ENCODE measurements at regions of chr10 and their contacts with region 1.

Region 1: GRCh38 chr10:117496616-117497028 is 45.9 kb upstream of the EMX2 start:
- DNase-seq: peak; percentile 72
- ATAC-seq: peak; percentile 98
- H3K4me3 ChIP-seq: no peak overlapping the region
- H3K27ac ChIP-seq: no peak overlapping the region
- H3K4me1 ChIP-seq: no peaks in the 10 kb centered on the region
- H3K27me3 ChIP-seq: no peaks in the 10 kb centered on the region
- CTCF ChIP-seq: peak; percentile 97
- POLR2A ChIP-seq: no peak
- RAD21 ChIP-seq: peak; percentile 98

Region 2: DNA sequence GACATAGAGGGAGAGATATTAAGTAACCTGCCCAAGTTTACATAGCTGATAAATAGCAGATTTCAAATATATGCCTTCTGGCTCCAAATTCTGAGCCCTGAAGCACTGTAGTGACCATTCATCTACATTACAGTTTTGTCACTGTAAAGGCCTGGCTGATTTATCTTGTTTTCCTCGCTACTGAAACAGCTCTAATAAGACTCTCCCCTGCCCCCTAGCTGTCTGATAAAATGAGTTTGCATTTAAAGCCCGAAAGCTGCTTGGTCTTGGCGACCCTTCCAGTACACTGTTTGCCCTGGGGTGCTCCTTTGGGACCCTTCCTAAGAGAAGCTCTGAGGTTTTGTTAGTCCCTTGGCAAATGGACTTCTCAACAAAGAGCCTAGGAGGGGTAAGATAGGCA is 609.8 kb after region 1 on chr10:
- CTCF ChIA-PET with region 1: no interaction called
- POLR2A ChIA-PET with region 1: no interaction called
- dilution Hi-C with region 1: no loop called
- in situ Hi-C with region 1: no loop called
- intact Hi-C with region 1: loop called (anchors 2 kb)
- DNase-seq: peak; percentile 21
- ATAC-seq: peak; percentile 44; the same call in 1 of the 2 replicates
- H3K4me3 ChIP-seq: no peak overlapping the region
- H3K27ac ChIP-seq: no peak overlapping the region
- H3K4me1 ChIP-seq: no peaks in the 10 kb centered on the region
- H3K27me3 ChIP-seq: no peaks in the 10 kb centered on the region
- CTCF ChIP-seq: peak; percentile 44
- POLR2A ChIP-seq: no peak
- RAD21 ChIP-seq: peak; percentile 48

Region 3: DNA sequence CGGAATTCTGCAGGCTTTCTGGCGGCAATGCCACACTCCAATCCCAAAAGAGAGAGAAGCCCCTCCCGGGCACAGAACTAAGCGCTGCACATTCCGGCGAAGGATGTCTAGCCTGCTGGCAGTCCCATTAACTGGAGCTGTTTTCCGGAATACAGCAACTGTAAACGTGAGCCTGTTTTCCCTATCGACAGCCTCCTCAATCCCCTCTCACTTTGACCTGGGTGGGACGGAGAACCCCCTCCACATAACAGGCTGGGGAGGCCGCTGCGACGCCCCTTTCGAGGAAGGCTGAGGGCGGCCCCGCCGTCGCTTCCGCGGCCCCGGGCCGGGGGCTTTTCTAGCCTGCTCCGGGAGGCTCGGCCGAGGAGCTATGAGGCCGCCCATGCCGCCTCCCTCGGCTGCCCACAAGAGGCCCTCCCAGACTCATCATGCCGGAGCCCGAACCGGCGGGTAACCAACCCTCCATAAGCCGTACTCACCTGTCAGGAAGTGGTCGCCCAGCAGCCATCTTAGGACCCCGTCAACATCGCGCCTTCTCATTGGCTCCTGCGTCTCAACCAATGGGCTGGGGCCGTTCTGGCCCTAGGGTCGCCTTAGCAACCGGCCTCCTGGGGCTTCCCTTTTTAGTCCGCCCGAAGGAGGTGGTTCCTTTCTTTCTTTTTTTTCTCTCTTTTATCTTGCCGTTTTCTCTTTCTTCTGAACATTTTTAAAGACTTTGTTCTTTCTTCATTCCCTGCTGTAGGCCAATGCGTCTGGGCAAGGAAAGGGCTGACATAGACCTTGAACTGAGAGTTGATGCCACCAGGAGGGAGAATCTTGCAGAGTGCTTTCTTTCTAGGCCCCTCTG is 845.4 kb after region 1 on chr10 and contains the start of gene FAM204A:
- CTCF ChIA-PET with region 1: interaction called, 3 read pairs
- POLR2A ChIA-PET with region 1: no interaction called
- dilution Hi-C with region 1: no loop called
- in situ Hi-C with region 1: no loop called
- intact Hi-C with region 1: loop called (anchors 1 kb)
- DNase-seq: peak; percentile 90
- ATAC-seq: peak; percentile 99
- H3K4me3 ChIP-seq: peak within 1 kb of the TSS; percentile 90
- H3K27ac ChIP-seq: peak within 1 kb of the TSS; percentile 57
- H3K4me1 ChIP-seq: no peaks in the 10 kb centered on the region
- H3K27me3 ChIP-seq: no peaks in the 10 kb centered on the region
- CTCF ChIP-seq: no peak
- POLR2A ChIP-seq: peak; percentile 56
- RAD21 ChIP-seq: no peak
- total RNA-seq, gene FAM204A: 50.5 and 54.3 TPM in 2 replicates

Region 4: GRCh38 chr10:118459726-118460193 is 963.1 kb after region 1 on chr10:
- CTCF ChIA-PET with region 1: interaction called, 16 read pairs
- POLR2A ChIA-PET with region 1: no interaction called
- dilution Hi-C with region 1: no loop called
- in situ Hi-C with region 1: loop called (anchors 10 kb)
- intact Hi-C with region 1: loop called (anchors 1 kb)
- DNase-seq: peak; percentile 39
- ATAC-seq: peak; percentile 98
- H3K4me3 ChIP-seq: no peak overlapping the region
- H3K27ac ChIP-seq: no peak overlapping the region
- H3K4me1 ChIP-seq: no peaks in the 10 kb centered on the region
- H3K27me3 ChIP-seq: no peaks in the 10 kb centered on the region
- CTCF ChIP-seq: peak; percentile 69
- POLR2A ChIP-seq: no peak
- RAD21 ChIP-seq: peak; percentile 67

Region 5: GRCh38 chr10:118568327-118568848 is 1071.8 kb after region 1 on chr10:
- CTCF ChIA-PET with region 1: interaction called, 3 read pairs
- POLR2A ChIA-PET with region 1: no interaction called
- dilution Hi-C with region 1: no loop called
- in situ Hi-C with region 1: no loop called
- intact Hi-C with region 1: loop called (anchors 1 kb)
- DNase-seq: peak; percentile 56
- ATAC-seq: peak; percentile 69
- H3K4me3 ChIP-seq: no peak overlapping the region
- H3K27ac ChIP-seq: no peak overlapping the region
- H3K4me1 ChIP-seq: peaks cover 2% of the 10 kb centered on the region; the same call in 1 of the 2 replicates
- H3K27me3 ChIP-seq: peaks cover 10% of the 10 kb centered on the region
- CTCF ChIP-seq: peak; percentile 82
- POLR2A ChIP-seq: no peak
- RAD21 ChIP-seq: peak; percentile 85